ENCODE measurements at regions of chr7 and their contacts with region 1.

Region 1: DNA sequence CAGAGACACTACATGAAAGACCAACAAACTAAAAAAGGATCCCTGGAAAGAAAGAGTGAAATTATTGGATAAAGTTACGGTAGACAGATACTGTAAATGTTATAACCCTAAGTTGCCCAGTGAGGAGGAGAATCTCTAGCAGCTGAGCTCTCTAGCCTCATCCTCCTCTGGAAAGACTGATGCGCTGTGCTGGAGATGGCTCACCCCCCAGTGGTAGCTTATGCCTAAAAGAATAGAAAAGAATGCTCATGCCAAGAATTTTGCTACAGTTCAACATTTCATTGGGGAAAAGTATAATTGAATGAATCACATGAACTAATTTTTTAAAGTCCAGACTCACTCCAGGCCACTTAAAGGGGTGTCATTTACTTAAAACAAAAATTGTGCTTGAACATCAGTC is 50.8 kb upstream of the RNF32 start:
- DNase-seq: no peak
- H3K4me3 Mint-ChIP-seq: no peak overlapping the region
- H3K27ac Mint-ChIP-seq: no peak overlapping the region
- H3K4me1 Mint-ChIP-seq: no peaks in the 10 kb centered on the region
- H3K27me3 Mint-ChIP-seq: peaks cover 13% of the 10 kb centered on the region
- CTCF ChIP-seq: no peak

Region 2: GRCh38 chr7:156487811-156488533 is 101.8 kb before region 1 on chr7:
- CTCF ChIA-PET with region 1: no interaction called
- intact Hi-C with region 1: no loop called
- DNase-seq: no peak
- H3K4me3 Mint-ChIP-seq: no peak overlapping the region
- H3K27ac Mint-ChIP-seq: no peak overlapping the region
- H3K4me1 Mint-ChIP-seq: no peaks in the 10 kb centered on the region
- H3K27me3 Mint-ChIP-seq: peaks cover 82% of the 10 kb centered on the region
- CTCF ChIP-seq: no peak

Region 3: GRCh38 chr7:156607332-156608172 is 17.7 kb after region 1 on chr7:
- CTCF ChIA-PET with region 1: no interaction called
- intact Hi-C with region 1: loop called (anchors 2 kb)
- DNase-seq: no peak
- H3K4me3 Mint-ChIP-seq: peak overlapping the region; percentile 52
- H3K27ac Mint-ChIP-seq: no peak overlapping the region
- H3K4me1 Mint-ChIP-seq: no peaks in the 10 kb centered on the region
- H3K27me3 Mint-ChIP-seq: peaks cover 72% of the 10 kb centered on the region
- CTCF ChIP-seq: no peak

Region 4: DNA sequence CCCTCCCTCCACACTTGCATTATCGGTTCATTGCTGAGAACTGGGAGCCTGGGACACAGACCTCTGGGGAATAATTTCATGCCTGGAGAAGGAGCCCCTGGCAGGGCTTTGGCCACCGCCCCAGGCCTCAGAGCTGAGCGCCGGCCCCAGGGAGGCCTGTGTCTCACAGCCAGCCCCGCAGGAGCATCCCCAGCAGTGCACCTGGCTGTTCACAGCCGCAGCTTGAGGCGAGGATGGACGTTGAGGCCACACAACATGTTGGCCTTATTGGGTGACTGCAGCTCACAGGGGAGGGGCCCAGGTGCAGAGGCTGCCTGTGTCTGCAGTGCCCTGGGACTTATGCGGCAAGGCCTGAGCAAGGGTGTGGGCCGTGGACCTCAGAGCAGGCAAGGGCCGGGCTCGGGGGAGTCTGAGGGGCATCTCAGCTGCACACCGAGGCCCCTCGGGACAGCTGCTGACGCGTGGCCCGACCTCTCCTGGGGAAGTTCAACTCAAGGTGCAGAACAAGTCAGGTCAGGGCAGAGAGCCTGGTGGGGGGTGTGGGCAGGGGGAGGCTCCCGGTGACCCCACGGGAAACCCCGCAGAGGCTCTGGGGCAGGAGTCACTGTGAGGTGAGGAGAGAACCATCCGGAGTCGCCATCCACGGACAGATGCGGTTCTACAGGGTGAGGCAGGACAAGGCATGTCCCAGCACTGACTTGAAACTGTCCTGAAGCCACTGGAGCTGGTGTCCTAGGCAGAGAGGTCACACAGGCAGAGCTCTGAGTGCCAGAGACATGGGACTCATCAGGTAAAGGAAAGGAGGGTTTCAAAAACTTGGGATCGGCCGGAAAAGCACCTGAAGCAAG is 535.8 kb after region 1 on chr7:
- CTCF ChIA-PET with region 1: no interaction called
- intact Hi-C with region 1: no loop called
- DNase-seq: no peak
- H3K4me3 Mint-ChIP-seq: no peak overlapping the region
- H3K27ac Mint-ChIP-seq: no peak overlapping the region
- H3K4me1 Mint-ChIP-seq: no peaks in the 10 kb centered on the region
- H3K27me3 Mint-ChIP-seq: peaks cover 20% of the 10 kb centered on the region
- CTCF ChIP-seq: no peak